HCT116 (cell line): ENCODE measurements at regions of chrX and their contacts with region 1.

Region 1: DNA sequence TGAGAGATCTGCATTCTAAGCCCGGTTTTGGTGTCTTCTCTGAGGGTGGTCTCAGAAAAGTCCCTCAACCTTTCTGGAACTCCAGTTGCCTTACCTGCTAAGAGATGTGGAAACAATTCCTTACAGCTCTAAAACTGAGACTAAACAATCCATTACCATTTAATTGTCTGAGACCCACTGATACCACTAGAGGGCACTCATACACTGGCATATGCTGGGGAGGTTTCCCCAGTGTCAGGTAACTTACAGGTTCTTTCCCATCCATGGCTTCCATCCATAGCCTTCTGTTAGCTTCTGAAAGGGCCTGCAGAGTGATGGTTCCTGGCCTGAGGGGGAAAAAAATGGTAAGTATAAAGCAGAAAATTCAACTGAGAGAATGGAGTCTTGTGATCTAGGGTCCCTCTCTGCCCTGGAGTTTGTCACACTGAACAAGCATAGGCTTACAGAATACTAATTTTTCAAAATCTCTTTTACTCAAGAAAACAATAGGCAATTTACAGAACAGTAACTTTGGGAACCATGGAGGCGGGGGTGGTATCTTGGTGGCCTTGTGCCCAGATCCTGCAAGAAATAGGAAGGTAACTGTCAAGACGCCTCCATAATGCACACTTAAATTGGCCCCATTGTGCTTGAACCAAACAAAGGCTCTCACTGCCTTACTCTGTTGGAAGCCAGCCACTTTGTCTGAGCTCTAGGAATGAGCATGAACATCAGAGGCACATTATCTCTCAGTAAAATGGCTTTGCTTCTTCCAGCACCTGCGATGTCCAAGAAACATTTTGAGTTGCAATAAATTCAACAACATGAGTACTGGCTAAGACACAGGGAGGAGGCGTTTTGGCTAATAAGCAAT is 236.1 kb downstream of the OPHN1 start:
- DNase-seq: peak; percentile 37
- ATAC-seq: peak; percentile 87
- H3K4me3 ChIP-seq: no peak overlapping the region
- H3K27ac ChIP-seq: no peak overlapping the region
- H3K4me1 ChIP-seq: peaks cover 10 to 16% of the 10 kb centered on the region in 2 experiments
- H3K27me3 ChIP-seq: no peaks in the 10 kb centered on the region
- CTCF ChIP-seq: peak; percentile 53 to 67 (median 60)
- POLR2A ChIP-seq: no peak
- RAD21 ChIP-seq: peak; percentile 87

Region 2: DNA sequence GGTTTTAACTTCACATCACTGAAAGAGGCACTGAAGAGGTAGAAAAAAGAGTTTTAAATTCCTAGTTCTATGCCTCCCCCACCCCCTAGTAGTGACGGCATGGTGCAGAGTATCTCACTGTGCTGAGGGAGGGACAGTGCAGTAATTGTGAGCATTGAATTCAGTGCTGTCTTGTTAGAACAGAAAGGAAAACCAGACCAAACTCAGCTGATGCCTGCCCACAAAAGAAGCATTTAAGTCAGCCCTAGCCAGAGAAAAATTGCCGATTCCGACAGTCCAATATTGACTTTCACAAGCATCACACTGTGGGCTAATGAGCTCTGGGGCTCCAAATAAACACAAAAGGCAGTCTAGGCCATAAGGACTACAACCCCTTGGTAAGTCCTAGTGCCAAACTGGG is 235.6 kb before region 1 on chrX:
- CTCF ChIA-PET with region 1: no interaction called
- POLR2A ChIA-PET with region 1: no interaction called
- RAD21 ChIA-PET with region 1: no interaction called
- intact Hi-C with region 1: no loop called
- DNase-seq: no peak
- ATAC-seq: no peak
- H3K4me3 ChIP-seq: no peak overlapping the region
- H3K27ac ChIP-seq: no peak overlapping the region
- H3K4me1 ChIP-seq: no peaks in the 10 kb centered on the region
- H3K27me3 ChIP-seq: no peaks in the 10 kb centered on the region
- CTCF ChIP-seq: no peak
- POLR2A ChIP-seq: no peak
- RAD21 ChIP-seq: no peak

Region 3: GRCh38 chrX:68462653-68463052 is 265.5 kb after region 1 on chrX:
- CTCF ChIA-PET with region 1: interaction called, 10 read pairs
- POLR2A ChIA-PET with region 1: no interaction called
- RAD21 ChIA-PET with region 1: no interaction called
- intact Hi-C with region 1: loop called (anchors 5 kb)
- DNase-seq: peak; percentile 7
- ATAC-seq: peak; percentile 65
- H3K4me3 ChIP-seq: no peak overlapping the region
- H3K27ac ChIP-seq: no peak overlapping the region
- H3K4me1 ChIP-seq: peaks cover 0 to 8% of the 10 kb centered on the region in 2 experiments; a peak in 2 of 4 replicates
- H3K27me3 ChIP-seq: no peaks in the 10 kb centered on the region
- CTCF ChIP-seq: peak; percentile 29 to 48 (median 32); a peak in 4 of 6 replicates
- POLR2A ChIP-seq: no peak
- RAD21 ChIP-seq: peak; percentile 51

Region 4: GRCh38 chrX:68490599-68490998 is 293.4 kb after region 1 on chrX:
- CTCF ChIA-PET with region 1: interaction called, 17 read pairs
- POLR2A ChIA-PET with region 1: no interaction called
- RAD21 ChIA-PET with region 1: interaction called in 1 of 2 experiments, 5 read pairs
- intact Hi-C with region 1: loop called (anchors 1 kb)
- DNase-seq: no peak
- ATAC-seq: peak; percentile 99
- H3K4me3 ChIP-seq: no peak overlapping the region
- H3K27ac ChIP-seq: no peak overlapping the region
- H3K4me1 ChIP-seq: no peaks in the 10 kb centered on the region
- H3K27me3 ChIP-seq: no peaks in the 10 kb centered on the region
- CTCF ChIP-seq: peak in 2 of 3 experiments; percentile 50 to 53; a peak in 4 of 6 replicates
- POLR2A ChIP-seq: no peak
- RAD21 ChIP-seq: peak; percentile 41; the same call in 1 of the 2 replicates

Region 5: DNA sequence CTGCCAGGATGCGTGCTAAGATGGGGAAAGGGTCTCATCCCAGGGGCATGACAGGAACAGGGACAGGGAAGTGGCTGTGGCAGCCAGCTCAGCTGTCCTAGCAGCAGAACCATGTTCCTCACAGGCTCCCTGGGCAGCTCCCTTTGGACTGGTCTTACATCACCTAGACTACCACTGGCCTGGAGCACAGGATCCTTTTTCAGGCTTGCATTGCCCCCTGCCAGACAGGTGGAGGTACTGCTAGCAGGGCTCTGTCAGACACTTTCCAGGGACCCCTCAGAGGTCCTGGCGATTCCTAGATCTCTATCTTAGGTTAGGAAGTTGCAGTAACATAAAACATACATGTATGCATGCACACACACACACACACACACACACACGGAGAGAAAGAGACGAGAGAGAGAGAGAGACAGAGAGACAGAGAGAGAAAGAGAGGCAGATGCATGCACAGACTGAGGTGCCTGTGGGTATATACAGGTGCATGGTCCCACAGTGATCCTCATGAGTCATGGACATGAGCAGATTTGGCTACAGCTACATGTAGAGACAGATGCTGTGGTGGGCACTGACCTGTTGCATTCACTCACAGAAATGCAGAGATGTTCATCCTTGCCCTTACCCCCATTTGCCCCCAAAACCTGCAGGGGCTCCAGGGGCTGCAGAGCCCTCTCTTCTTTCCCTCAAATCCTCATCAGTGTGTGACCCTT is 513.9 kb after region 1 on chrX:
- CTCF ChIA-PET with region 1: interaction called, 38 read pairs
- POLR2A ChIA-PET with region 1: no interaction called
- RAD21 ChIA-PET with region 1: interaction called in 1 of 2 experiments, 10 read pairs
- intact Hi-C with region 1: loop called (anchors 1 kb)
- DNase-seq: peak; percentile 32
- ATAC-seq: peak; percentile 89
- H3K4me3 ChIP-seq: no peak overlapping the region
- H3K27ac ChIP-seq: no peak overlapping the region
- H3K4me1 ChIP-seq: no peaks in the 10 kb centered on the region
- H3K27me3 ChIP-seq: no peaks in the 10 kb centered on the region
- CTCF ChIP-seq: peak; percentile 50 to 59 (median 55); a peak in 5 of 6 replicates
- POLR2A ChIP-seq: no peak
- RAD21 ChIP-seq: peak; percentile 82

Region 6: GRCh38 chrX:68807818-68808217 is 610.7 kb after region 1 on chrX:
- CTCF ChIA-PET with region 1: interaction called, 13 read pairs
- POLR2A ChIA-PET with region 1: no interaction called
- RAD21 ChIA-PET with region 1: interaction called in 1 of 2 experiments, 4 read pairs
- intact Hi-C with region 1: loop called (anchors 5 kb)
- DNase-seq: peak; percentile 18
- ATAC-seq: peak; percentile 75
- H3K4me3 ChIP-seq: no peak overlapping the region
- H3K27ac ChIP-seq: no peak overlapping the region
- H3K4me1 ChIP-seq: no peaks in the 10 kb centered on the region
- H3K27me3 ChIP-seq: no peaks in the 10 kb centered on the region
- CTCF ChIP-seq: peak; percentile 34 to 47 (median 40); a peak in 4 of 6 replicates
- POLR2A ChIP-seq: no peak
- RAD21 ChIP-seq: peak; percentile 61